Activated CD4-positive, alpha-beta T cell treated with anti-CD3 and anti-CD28 coated beads for 36 hours (primary cell): ENCODE measurements at regions of chrX and their contacts with region 1.

Region 1: DNA sequence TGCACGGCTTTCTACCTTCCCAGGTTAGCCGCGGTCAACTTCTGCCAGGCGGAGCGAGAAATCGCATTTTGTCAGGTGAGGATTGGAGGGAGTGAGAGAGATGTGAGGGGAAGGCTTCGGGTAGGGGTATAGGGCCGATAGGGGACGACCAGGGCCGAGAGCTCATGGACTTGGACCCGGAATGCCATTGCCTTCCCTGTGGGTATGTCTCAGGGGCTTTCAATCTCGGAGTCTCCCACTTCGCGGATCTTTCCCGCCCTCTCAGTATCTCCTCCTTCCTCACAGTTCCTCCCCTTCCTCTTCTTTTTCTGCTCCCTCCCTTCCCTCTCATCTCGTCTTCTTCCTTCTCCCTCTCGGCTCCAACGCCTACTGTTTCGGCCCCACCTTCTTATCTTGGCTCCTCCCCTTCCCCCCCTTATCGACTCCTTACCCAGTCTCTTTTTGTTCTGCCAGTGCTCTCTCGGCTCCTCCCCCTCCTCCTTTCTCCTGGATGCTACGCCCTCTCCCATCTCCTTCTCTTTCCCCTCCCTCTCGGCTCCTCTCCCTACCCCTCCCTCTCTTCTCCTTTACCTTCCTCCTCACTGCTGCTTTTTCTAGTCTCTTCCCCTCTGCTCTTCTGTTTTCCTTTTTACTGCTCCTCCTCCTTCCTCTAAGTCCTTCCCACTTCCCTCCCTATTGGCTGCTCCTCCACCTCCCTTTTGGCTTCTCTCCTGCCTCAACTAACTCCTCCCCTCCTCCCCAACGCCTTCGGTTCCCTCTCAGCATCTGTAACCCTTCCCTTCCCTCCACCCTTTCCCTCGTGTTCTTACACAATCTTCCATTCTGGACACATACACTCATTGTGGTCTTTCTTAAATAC is 29.4 kb upstream of the RBMX start:
- DNase-seq: peak; percentile 75
- ATAC-seq: peak; percentile 78
- H3K4me3 Mint-ChIP-seq: peak overlapping the region; percentile 90
- H3K27ac Mint-ChIP-seq: peak overlapping the region; percentile 79
- H3K4me1 Mint-ChIP-seq: peaks cover 16% of the 10 kb centered on the region
- H3K27me3 Mint-ChIP-seq: no peaks in the 10 kb centered on the region

Region 2: DNA sequence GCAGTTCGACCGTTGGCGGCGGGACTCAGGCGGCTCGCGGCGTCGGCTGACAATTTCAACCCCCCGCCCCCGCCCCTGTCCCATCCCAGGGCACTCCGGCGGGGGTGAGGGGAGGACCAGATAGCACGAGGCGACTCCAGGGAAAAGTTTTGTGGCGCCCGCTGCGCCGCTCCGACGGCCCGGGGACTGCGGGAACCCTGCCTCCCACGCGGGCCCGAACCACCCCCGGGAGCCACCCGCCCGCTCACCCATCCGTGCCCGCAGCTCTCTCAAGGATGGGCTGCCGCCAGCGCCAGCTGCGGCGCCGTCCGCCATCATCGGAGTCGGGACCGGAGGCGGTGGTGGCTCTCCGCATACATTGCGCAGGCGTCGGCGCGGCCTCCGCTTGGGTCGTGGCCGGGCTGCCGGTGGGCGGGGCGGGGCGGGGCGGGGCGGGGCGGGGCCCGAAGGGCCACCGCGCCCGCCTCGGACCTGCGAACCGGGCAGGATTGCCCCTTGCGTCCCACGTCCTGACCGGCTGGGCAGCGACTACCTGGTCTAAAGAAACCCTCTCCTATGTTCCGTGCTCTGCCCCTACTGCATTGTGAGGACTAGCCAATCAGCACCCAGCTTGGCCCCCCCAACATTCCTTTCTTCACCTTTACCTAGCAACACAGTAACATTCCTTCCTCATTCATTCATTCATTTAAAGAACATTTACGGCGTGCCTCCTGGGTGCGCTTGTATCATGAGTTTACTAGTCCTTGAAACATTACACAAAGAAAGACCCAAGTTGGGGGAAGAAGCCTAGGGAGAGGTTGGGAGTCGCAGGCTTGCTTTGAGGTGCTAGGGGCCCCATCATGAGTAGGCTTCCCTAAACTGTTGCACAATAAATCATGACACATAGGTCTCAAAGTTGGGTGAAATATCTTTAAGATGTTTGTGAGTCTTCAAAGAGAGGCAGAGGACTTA is 658.6 kb before region 1 on chrX and contains the start of gene MAP7D3:
- CTCF ChIA-PET with region 1: no interaction called
- POLR2A ChIA-PET with region 1: no interaction called
- intact Hi-C with region 1: loop called in 1 of 2 experiments (anchors 10 kb)
- DNase-seq: peak; percentile 80
- ATAC-seq: peak; percentile 91
- H3K4me3 Mint-ChIP-seq: peak within 1 kb of the TSS; percentile 81
- H3K27ac Mint-ChIP-seq: peak within 1 kb of the TSS; percentile 80
- H3K4me1 Mint-ChIP-seq: peaks cover 8% of the 10 kb centered on the region
- H3K27me3 Mint-ChIP-seq: no peaks in the 10 kb centered on the region
- total RNA-seq, gene MAP7D3: 16.8 to 22.7 TPM

Region 3: GRCh38 chrX:136880452-136881013 is 29.4 kb before region 1 on chrX and contains the start of gene RBMX:
- CTCF ChIA-PET with region 1: no interaction called
- POLR2A ChIA-PET with region 1: interaction called, 8 read pairs
- intact Hi-C with region 1: loop called (anchors 1 to 2 kb)
- DNase-seq: peak; percentile 92
- ATAC-seq: peak; percentile 93
- H3K4me3 Mint-ChIP-seq: peak within 1 kb of the TSS; percentile 100
- H3K27ac Mint-ChIP-seq: peak within 1 kb of the TSS; percentile 100
- H3K4me1 Mint-ChIP-seq: peaks cover 19% of the 10 kb centered on the region
- H3K27me3 Mint-ChIP-seq: no peaks in the 10 kb centered on the region
- total RNA-seq, gene RBMX: 320 to 414 TPM

Region 4: DNA sequence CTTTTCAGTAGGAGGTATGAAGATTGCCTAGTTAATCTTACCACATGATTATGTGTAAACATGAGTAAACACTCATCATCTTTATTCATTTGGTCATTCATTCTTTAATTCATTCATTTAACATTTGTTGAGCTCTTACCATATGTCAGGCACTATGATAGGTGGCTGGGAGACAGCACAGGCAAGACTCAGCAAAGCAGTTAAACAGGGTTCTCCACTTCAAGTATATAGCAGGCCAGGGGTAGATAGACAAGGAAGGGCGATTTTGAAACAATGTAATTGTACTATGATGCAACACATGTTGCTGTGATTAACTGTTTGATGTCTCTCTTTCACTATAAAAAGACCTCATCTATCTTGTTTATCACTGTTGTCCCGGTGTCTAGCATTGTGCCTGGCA is 208.2 kb after region 1 on chrX:
- CTCF ChIA-PET with region 1: no interaction called
- POLR2A ChIA-PET with region 1: no interaction called
- intact Hi-C with region 1: no loop called
- DNase-seq: no peak
- ATAC-seq: no peak
- H3K4me3 Mint-ChIP-seq: no peak overlapping the region
- H3K27ac Mint-ChIP-seq: no peak overlapping the region
- H3K4me1 Mint-ChIP-seq: no peaks in the 10 kb centered on the region
- H3K27me3 Mint-ChIP-seq: peaks cover 11% of the 10 kb centered on the region

Region 5: DNA sequence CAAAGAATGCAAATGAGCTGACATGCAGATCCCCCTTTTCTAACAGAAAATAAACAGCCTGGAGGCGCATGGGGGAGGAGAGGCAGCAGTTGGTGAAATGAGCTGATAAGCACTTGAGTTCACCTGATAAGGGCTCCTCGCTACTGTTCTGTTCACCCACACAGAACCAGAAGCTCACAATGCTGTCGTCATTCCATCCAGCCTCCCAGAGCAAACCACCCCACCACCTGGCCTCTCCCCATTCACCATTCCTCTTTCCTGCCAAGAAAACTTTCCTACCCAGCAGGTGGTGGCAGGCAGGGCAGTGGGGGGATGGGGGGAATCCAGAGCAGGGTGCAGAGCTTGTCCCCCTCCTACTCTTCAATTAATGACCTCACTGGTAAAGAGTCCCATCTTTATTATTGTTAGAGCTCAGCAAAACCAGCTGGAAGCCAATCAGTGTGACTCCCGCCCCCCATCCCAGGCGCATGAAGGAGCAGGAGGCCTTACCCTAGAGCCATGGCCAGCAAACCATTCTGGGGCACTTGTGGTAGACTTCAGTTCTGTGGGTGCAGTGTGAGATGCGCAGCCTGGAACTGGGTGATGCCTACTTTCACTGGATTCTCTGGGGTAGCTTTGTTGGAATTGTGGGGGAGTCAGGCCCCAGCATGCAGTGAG is 1006.3 kb after region 1 on chrX:
- CTCF ChIA-PET with region 1: no interaction called
- POLR2A ChIA-PET with region 1: no interaction called
- intact Hi-C with region 1: no loop called
- DNase-seq: no peak
- ATAC-seq: no peak
- H3K4me3 Mint-ChIP-seq: no peak overlapping the region
- H3K27ac Mint-ChIP-seq: no peak overlapping the region
- H3K4me1 Mint-ChIP-seq: no peaks in the 10 kb centered on the region
- H3K27me3 Mint-ChIP-seq: no peaks in the 10 kb centered on the region